Activated CD4-positive, alpha-beta T cell treated with anti-CD3 and anti-CD28 coated beads for 36 hours (primary cell): ENCODE measurements at regions of chr19 and their contacts with region 1.

Region 1: GRCh38 chr19:41795031-41795461 is 1.3 kb upstream of the CEACAM3 start:
- DNase-seq: peak; percentile 77
- ATAC-seq: peak; percentile 94
- H3K4me3 Mint-ChIP-seq: no peak overlapping the region
- H3K27ac Mint-ChIP-seq: no peak overlapping the region
- H3K4me1 Mint-ChIP-seq: no peaks in the 10 kb centered on the region
- H3K27me3 Mint-ChIP-seq: peaks cover 23% of the 10 kb centered on the region

Region 2: GRCh38 chr19:41641879-41642485 is 153.1 kb before region 1 on chr19:
- CTCF ChIA-PET with region 1: interaction called, 10 read pairs
- POLR2A ChIA-PET with region 1: no interaction called
- intact Hi-C with region 1: no loop called
- DNase-seq: peak; percentile 82
- ATAC-seq: peak; percentile 76
- H3K4me3 Mint-ChIP-seq: no peak overlapping the region
- H3K27ac Mint-ChIP-seq: no peak overlapping the region
- H3K4me1 Mint-ChIP-seq: peaks cover 19% of the 10 kb centered on the region
- H3K27me3 Mint-ChIP-seq: peaks cover 7% of the 10 kb centered on the region

Region 3: DNA sequence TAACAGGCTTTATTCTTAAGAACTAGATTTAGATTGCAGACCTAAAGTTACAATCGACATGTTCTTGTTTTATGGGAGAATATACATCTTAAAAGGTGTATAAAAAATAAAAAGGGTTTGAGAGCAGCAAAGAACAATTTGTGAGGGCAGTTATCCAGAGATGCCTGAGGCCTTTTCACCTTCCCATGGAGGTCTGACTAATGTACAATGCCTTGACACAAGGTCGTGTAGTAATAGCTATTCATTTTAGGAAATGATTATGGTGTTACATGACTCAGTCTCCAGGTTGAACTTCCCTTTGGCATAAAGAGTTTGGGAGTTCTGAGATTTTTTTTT is 19.7 kb before region 1 on chr19:
- CTCF ChIA-PET with region 1: interaction called, 32 read pairs
- POLR2A ChIA-PET with region 1: no interaction called
- intact Hi-C with region 1: no loop called
- DNase-seq: no peak
- ATAC-seq: no peak
- H3K4me3 Mint-ChIP-seq: no peak overlapping the region
- H3K27ac Mint-ChIP-seq: no peak overlapping the region
- H3K4me1 Mint-ChIP-seq: peaks cover 33% of the 10 kb centered on the region
- H3K27me3 Mint-ChIP-seq: peaks cover 68% of the 10 kb centered on the region

Region 4: GRCh38 chr19:41821003-41821735 is 26.1 kb after region 1 on chr19:
- CTCF ChIA-PET with region 1: interaction called, 137 read pairs
- POLR2A ChIA-PET with region 1: interaction called, 3 read pairs
- intact Hi-C with region 1: loop called (anchors 1 kb)
- DNase-seq: peak; percentile 67
- ATAC-seq: peak; percentile 90
- H3K4me3 Mint-ChIP-seq: no peak overlapping the region
- H3K27ac Mint-ChIP-seq: no peak overlapping the region
- H3K4me1 Mint-ChIP-seq: no peaks in the 10 kb centered on the region
- H3K27me3 Mint-ChIP-seq: peaks cover 10% of the 10 kb centered on the region

Region 5: GRCh38 chr19:41904118-41904870 is 109.2 kb after region 1 on chr19:
- CTCF ChIA-PET with region 1: no interaction called
- POLR2A ChIA-PET with region 1: no interaction called
- intact Hi-C with region 1: no loop called
- DNase-seq: no peak
- ATAC-seq: no peak
- H3K4me3 Mint-ChIP-seq: no peak overlapping the region
- H3K27ac Mint-ChIP-seq: peak overlapping the region; percentile 55
- H3K4me1 Mint-ChIP-seq: peaks cover 24% of the 10 kb centered on the region
- H3K27me3 Mint-ChIP-seq: no peaks in the 10 kb centered on the region

Region 6: DNA sequence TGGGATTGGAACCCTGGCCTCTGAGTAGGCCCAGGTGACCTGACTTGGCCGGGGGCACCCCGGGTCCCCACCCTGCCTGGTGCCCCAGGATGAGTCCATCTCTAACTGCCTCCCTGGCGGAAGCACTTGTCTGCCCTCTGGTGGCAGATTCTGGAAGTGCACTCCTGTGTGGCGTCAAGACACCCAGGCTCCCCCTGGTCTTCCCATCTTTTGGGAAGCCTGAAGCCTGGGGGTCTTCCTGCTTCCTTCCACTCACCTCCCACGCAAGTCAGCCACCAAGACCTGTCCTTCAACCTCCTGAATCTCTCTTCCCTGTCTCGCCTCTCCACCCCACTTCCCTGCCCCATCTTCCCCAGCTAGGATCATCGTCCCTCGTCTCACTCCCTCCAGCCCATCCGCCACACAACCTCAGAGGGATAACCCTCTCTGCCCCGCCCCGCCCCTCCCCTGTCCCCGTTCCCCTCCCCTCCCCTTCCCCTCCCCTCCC is 156.7 kb after region 1 on chr19:
- CTCF ChIA-PET with region 1: interaction called, 8 read pairs
- POLR2A ChIA-PET with region 1: no interaction called
- intact Hi-C with region 1: loop called (anchors 5 kb)
- DNase-seq: peak; percentile 94
- ATAC-seq: peak; percentile 90
- H3K4me3 Mint-ChIP-seq: no peak overlapping the region
- H3K27ac Mint-ChIP-seq: peak overlapping the region; percentile 7
- H3K4me1 Mint-ChIP-seq: peaks cover 15% of the 10 kb centered on the region
- H3K27me3 Mint-ChIP-seq: no peaks in the 10 kb centered on the region

Region 7: DNA sequence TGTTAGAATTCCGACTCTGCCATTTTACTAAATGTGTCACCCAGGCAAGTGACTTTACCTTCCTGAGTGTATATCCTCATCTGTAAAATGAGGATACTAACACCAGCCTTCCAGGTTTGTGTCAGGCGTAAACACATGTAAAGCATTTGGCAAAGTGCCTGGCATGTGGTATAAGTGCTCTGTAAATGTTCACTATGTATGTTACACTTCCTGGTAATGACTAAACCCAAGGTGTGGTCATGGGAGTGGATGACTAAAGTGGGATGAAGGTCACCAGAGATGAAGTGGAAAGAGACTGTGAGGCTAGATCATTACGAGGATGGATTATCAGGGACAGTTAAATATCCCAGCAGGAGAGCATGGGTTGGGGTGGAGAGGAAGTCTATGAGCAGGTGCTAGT is 396.8 kb after region 1 on chr19:
- CTCF ChIA-PET with region 1: no interaction called
- POLR2A ChIA-PET with region 1: no interaction called
- intact Hi-C with region 1: no loop called
- DNase-seq: peak; percentile 73
- ATAC-seq: peak; percentile 88
- H3K4me3 Mint-ChIP-seq: no peak overlapping the region
- H3K27ac Mint-ChIP-seq: peak overlapping the region; percentile 72
- H3K4me1 Mint-ChIP-seq: peaks cover 41% of the 10 kb centered on the region
- H3K27me3 Mint-ChIP-seq: no peaks in the 10 kb centered on the region